ENCODE measurements at regions of chr15 and their contacts with region 1.

Region 1: DNA sequence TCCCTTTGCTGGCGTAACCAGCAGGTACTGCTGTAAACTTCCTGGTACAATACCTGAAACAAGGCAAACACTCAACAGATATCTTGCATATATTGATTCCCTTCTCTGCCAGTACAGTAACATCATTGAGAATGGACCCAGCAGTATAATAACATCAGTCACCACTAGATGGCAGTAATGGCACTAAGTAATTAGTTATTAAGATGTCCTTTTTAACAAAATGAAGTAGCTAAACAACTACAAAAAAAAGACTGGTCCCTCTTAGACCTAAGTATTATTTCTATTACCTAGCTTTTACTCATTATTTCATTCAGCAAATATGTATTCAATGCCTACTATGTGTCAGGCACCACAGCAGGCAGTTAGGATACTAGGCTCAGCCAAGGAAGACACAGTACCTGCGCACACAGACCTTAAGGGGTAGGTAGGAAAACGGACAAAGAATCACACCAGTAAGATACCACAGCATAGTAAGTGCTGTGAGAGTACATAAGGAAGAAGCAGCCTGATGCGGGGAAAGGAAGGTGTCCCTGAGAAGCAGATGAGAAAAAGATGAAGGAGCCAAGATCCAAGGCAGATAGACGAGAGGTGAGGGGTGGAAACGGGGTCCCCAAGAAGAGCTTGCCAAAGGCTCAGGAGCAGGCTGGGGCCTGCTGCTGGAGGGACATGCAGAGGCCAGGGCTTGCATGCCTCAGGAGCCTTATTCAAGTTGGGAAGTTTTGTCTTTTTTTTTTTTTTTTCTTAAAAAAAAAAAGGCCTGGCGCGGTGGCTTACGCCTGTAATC is 102.8 kb upstream of the CHD2 start:
- DNase-seq: peak in 1 of 2 donors; percentile 69
- H3K4me3 ChIP-seq: no peak overlapping the region
- CTCF ChIP-seq: no peak
- POLR2A ChIP-seq: no peak

Region 2: DNA sequence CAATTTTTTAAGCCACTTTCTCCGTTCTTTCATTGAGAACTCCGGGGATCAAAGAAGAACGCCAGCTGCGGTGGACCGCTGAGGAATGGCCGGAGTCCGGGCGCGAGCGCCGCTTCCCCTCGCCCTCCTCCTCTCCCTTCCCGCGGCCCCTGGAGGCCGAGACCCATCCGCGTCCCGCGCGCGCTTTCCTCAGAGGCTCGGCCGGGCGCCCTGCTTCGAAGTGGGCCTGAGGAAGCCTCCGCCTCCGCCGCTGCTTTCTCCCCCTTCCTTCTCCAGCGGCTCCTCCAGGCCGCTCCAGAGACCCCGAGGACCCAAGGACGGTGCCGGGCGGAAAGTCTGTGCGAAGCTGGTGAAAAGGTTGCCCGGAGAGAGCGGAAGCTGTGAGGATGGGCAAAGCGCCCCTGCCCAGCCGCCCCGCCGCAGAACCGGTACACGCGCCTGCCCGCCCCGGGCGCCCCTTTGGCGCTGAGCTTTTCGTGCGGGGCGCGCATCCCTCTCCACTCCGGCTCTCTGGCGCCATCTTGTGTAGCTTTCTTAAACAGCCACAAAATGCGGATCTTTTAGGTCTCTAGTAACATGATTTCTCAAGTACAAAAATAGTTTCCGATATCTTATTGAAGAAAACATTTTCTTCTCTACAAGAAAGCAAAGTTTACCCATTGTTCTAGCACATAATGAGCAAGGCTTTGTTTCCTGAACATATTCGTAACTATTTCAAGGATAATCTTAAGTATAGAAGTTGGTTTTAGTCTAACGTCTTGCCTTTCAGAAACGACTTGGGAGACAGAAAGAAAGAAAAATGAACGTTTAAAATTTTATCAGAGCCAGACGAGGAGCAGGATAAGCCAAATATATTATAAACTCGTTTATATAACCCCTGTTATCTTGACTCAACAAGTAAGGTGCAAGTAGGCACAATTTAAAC is 82.6 kb before region 1 on chr15:
- intact Hi-C with region 1: no loop called
- DNase-seq: peak; percentile 80 to 95
- H3K4me3 ChIP-seq: peak overlapping the region; percentile 30
- CTCF ChIP-seq: peak in 1 of 3 donors; percentile 70
- POLR2A ChIP-seq: no peak

Region 3: GRCh38 chr15:92917606-92918407 is 120.4 kb after region 1 on chr15:
- intact Hi-C with region 1: loop called (anchors 5 kb)
- DNase-seq: peak; percentile 98 to 99
- H3K4me3 ChIP-seq: no peak overlapping the region
- CTCF ChIP-seq: peak in 1 of 3 donors; percentile 95
- POLR2A ChIP-seq: no peak

Region 4: GRCh38 chr15:93129702-93130488 is 332.5 kb after region 1 on chr15:
- intact Hi-C with region 1: no loop called
- DNase-seq: no peak
- H3K4me3 ChIP-seq: no peak overlapping the region
- CTCF ChIP-seq: no peak
- POLR2A ChIP-seq: no peak

Measured in lower leg skin (tissue), 4 donors.